Caco-2 (cell line): ENCODE measurements at regions of chr11 and their contacts with region 1.

Region 1: GRCh38 chr11:19240420-19241259 is at the start of gene E2F8:
- DNase-seq: peak; percentile 99
- H3K4me3 ChIP-seq: peak within 1 kb of the TSS; percentile 96
- H3K4me3 Mint-ChIP-seq: peak within 1 kb of the TSS; percentile 97
- H3K27ac Mint-ChIP-seq: peak within 1 kb of the TSS; percentile 90
- H3K4me1 ChIP-seq: peaks cover 48% of the 10 kb centered on the region
- H3K4me1 Mint-ChIP-seq: peaks cover 21% of the 10 kb centered on the region
- H3K27me3 ChIP-seq: no peaks in the 10 kb centered on the region
- H3K27me3 Mint-ChIP-seq: no peaks in the 10 kb centered on the region
- CTCF ChIP-seq: no peak
- total RNA-seq, gene E2F8: 38.1 and 38.4 TPM in 2 replicates

Region 2: GRCh38 chr11:19116971-19117750 is 123.5 kb before region 1 on chr11 and contains the start of gene ZDHHC13:
- CTCF ChIA-PET with region 1: interaction called, 3 read pairs
- POLR2A ChIA-PET with region 1: no interaction called
- intact Hi-C with region 1: loop called (anchors 1 kb)
- DNase-seq: peak; percentile 98 to 99
- H3K4me3 ChIP-seq: peak within 1 kb of the TSS; percentile 83
- H3K4me3 Mint-ChIP-seq: peak within 1 kb of the TSS; percentile 92
- H3K27ac Mint-ChIP-seq: peak within 1 kb of the TSS; percentile 84
- H3K4me1 ChIP-seq: 0 out of 2 replicates have a peak, but pooled peaks cover 4% of the 10 kb centered on the region
- H3K4me1 Mint-ChIP-seq: peaks cover 13% of the 10 kb centered on the region
- H3K27me3 ChIP-seq: no peaks in the 10 kb centered on the region
- H3K27me3 Mint-ChIP-seq: no peaks in the 10 kb centered on the region
- CTCF ChIP-seq: peak; percentile 12 to 63
- total RNA-seq, gene ZDHHC13: 21.4 and 21.8 TPM in 2 replicates

Region 3: GRCh38 chr11:19209617-19210370 is 30.8 kb before region 1 on chr11:
- CTCF ChIA-PET with region 1: no interaction called
- POLR2A ChIA-PET with region 1: no interaction called
- intact Hi-C with region 1: loop called (anchors 2 kb)
- DNase-seq: peak; percentile 71 to 82
- H3K4me3 ChIP-seq: no peak overlapping the region
- H3K4me3 Mint-ChIP-seq: peak overlapping the region; percentile 36
- H3K27ac Mint-ChIP-seq: peak overlapping the region; percentile 60
- H3K4me1 ChIP-seq: peaks cover 40% of the 10 kb centered on the region
- H3K4me1 Mint-ChIP-seq: peaks cover 28% of the 10 kb centered on the region
- H3K27me3 ChIP-seq: no peaks in the 10 kb centered on the region
- H3K27me3 Mint-ChIP-seq: no peaks in the 10 kb centered on the region
- CTCF ChIP-seq: no peak

Region 4: DNA sequence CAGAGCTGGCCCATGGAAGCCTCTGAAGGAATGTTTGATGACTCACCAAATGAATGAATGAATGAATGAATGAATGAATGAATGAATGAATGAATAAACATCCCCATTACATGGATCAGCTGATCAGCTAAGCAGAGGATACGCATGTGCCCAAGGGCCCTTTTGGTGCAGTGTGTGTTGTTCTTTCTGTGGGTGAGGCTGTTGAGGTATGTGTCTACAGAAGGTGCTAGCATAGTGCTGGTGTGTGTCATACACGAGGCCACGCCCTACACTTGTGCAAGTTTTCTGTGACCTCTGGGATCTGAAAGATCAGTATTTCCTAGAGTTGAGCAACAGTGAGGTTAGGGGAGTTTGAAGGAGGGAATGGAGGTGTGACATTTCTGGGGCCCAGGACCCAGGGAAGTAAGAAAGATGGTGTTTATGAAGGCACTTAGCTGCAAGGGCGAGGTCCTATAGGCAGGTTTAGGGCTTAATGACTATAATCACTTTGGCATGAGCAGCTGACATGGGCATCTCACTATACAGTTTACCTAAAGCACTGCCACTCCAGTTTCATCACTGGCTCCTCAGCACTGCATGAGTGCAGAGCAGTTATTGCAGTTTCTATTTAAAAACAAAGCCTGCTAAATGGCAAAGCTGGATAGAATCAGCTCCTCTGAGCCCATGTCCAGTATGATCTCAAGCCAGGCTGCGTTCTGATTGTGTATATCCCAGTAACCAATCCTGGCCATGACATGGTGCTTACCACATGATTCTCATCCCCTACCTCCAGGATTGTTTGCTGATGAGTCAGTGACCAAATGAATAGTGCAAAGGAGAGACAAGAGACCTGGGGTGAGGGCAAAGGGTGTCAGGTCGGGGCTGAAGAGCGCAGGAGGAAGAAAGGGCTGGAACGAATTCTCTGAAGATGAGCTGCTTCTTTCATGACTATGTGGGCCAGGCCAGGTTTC is 36.5 kb after region 1 on chr11:
- CTCF ChIA-PET with region 1: no interaction called
- POLR2A ChIA-PET with region 1: no interaction called
- intact Hi-C with region 1: loop called (anchors 1 kb)
- DNase-seq: peak; percentile 81 to 89
- H3K4me3 ChIP-seq: no peak overlapping the region
- H3K4me3 Mint-ChIP-seq: peak overlapping the region; percentile 17
- H3K27ac Mint-ChIP-seq: peak overlapping the region; percentile 37
- H3K4me1 ChIP-seq: peaks cover 28% of the 10 kb centered on the region
- H3K4me1 Mint-ChIP-seq: peaks cover 17% of the 10 kb centered on the region
- H3K27me3 ChIP-seq: no peaks in the 10 kb centered on the region
- H3K27me3 Mint-ChIP-seq: no peaks in the 10 kb centered on the region
- CTCF ChIP-seq: no peak

Region 5: GRCh38 chr11:19290356-19290755 is 49.7 kb after region 1 on chr11:
- CTCF ChIA-PET with region 1: no interaction called
- POLR2A ChIA-PET with region 1: no interaction called
- intact Hi-C with region 1: no loop called
- DNase-seq: no peak
- H3K4me3 ChIP-seq: no peak overlapping the region
- H3K4me3 Mint-ChIP-seq: no peak overlapping the region
- H3K27ac Mint-ChIP-seq: no peak overlapping the region
- H3K4me1 ChIP-seq: no peaks in the 10 kb centered on the region
- H3K4me1 Mint-ChIP-seq: no peaks in the 10 kb centered on the region
- H3K27me3 ChIP-seq: no peaks in the 10 kb centered on the region
- H3K27me3 Mint-ChIP-seq: peaks cover 2% of the 10 kb centered on the region
- CTCF ChIP-seq: no peak